Caki2 (cell line): ENCODE measurements at regions of chr16 and their contacts with region 1.

Region 1: DNA sequence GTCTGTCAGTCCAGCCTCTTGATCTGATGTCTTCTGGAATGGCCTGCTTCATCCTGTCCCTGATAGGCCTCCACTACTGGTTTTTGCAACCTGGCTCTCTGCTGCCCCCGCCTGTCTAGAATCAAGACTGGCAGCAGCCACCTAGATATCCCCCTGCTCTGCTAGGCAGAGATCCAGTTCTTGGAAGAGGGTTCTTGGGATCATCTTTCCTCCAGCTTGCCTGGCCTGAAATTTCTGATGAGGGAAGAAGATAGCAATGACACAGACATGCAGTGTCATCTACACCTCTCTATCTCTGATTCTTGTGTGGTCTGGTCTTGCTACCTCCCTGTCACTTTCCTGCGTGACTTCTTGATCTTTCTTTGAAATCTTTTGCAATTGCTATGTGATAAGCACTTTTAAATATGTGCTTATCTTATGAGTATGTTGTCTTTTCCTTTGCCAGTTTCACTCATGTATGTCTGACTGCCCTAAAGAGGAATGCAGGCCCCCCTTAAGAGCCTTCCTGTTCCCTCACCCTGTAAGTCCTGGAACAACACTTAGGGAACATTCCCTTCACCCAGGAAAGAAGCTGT is 20.3 kb upstream of the NFATC3 start:
- DNase-seq: peak; percentile 50

Region 2: DNA sequence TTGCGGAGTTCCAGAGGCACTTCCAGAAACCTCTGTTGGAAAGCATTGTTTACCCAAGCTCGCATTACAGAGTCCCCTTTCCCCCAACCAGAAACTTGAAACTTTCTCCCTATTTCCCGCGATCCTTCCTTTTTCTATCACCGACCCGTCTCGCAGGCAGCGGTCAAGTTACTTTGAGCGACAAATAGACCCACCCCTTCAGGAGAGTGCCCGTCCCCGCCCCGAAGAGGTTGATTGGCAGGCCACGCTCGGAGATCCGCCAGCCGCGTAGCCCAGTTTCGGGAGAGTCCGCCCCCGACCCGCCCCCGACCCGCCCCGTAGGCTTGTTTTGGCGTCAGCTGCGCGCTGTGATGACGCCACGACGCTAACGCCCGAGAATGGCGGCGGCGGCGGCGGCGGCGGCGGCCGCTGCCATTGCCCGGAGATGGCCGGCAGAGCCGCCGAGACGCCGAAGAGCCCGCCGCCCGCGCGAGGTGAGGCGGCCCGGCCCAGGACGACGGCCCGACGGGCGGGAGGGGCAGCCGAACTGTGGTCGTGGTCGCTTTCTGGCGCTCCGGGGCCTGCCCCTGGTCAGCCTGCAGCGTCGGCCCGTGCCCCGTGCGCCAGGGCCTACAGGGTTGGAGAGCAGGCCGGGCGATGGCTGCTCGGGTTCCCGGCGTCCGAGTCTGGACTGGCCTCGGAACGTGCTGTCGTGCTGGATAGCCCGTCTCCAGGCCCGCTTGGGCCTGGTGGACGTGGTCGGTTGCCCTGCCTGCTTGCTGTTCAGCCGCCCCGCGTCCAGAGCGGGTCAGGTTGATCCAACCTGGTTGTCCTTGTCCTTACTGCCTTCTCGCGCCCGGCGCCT is 171.8 kb before region 1 on chr16 and contains the start of gene PSKH1:
- in situ Hi-C with region 1: loop called (anchors 25 kb)
- DNase-seq: peak; percentile 88
- total RNA-seq, gene PSKH1: 18.0 and 25.9 TPM in 2 replicates

Region 3: DNA sequence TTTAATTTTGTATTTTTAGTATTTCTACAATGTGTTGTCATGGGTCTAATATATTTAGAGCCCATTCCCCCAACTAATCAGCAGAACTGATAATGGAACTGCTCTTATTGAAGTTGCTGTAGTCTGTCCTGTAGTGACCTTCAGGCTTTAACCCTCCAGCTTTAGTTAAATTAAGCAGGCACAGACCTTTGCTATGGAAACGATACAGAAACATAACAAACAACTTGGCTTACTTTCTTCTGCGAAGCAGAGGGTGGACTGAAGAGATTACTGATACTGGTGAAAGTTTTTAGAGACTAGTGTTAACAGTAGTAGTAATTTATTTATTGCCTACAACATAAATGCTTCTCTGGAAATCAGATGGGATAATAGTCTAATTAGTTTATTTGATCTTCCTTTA is 81.7 kb after region 1 on chr16:
- in situ Hi-C with region 1: no loop called
- DNase-seq: peak; percentile 27

Region 4: GRCh38 chr16:68200088-68200783 is 135.4 kb after region 1 on chr16:
- in situ Hi-C with region 1: loop called (anchors 25 kb)
- DNase-seq: peak; percentile 33